GM12878 (cell line): ENCODE measurements at regions of chr2 and their contacts with region 1.

Region 1: DNA sequence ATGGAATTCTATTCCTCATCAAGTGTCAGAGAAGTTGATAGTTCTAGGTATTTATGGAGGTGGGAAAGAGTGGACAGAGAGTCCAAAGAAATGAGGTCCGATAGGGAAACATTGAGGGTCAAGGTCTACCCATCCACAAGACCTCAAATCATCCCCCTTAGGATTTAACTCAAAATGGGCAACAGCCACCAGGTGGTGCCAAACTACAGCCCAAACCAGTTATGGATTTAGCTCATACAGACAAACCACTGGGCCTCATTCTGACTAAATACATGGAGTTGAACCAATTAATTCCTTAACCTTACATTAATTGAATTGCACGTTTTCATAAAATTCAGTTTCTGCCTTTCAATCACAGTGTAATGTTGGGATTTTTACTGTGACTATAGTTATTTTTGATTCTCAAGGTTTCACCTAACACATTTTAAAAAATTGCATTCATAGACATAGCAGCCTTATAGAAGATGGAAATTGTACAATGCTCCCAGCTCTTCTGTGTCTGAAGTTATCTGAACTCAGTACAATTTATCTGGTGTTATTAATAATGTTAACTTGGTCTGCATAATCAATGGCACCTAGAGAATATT is 98.2 kb upstream of the HNMT start:
- DNase-seq: no peak
- ATAC-seq: peak; percentile 89
- H3K4me3 ChIP-seq: no peak overlapping the region
- H3K27ac ChIP-seq: no peak overlapping the region
- H3K4me1 ChIP-seq: no peaks in the 10 kb centered on the region
- H3K27me3 ChIP-seq: no peaks in the 10 kb centered on the region
- CTCF ChIP-seq: peak; percentile 66 to 79 (median 67); a peak in 5 of 6 replicates
- EP300 ChIP-seq: no peak
- POLR2A ChIP-seq: no peak
- RAD21 ChIP-seq: peak; percentile 81

Region 2: DNA sequence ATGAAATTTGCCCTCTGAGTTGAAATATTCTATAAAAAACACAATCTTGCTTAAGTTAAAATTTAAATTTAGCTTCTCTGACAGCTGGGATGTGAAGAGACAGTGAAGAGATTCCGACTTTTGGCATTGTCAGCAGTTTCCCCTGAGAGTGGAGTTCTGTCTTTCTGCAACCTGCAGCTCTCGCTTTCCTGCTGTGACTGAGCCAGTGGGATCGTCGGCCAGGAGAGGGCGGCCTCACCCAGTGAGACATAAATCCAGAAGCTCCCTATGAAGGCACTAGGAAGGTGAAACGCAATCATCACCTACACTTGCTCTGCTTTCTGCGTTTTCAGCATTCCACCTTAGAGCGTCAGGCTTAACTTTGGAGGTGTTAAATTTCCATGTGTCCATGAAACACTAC is 22.8 kb after region 1 on chr2:
- CTCF ChIA-PET with region 1: interaction called, 7 read pairs
- POLR2A ChIA-PET with region 1: no interaction called
- RAD21 ChIA-PET with region 1: interaction called, 3 read pairs
- SMC1A ChIA-PET with region 1: interaction called, 3 read pairs
- in situ Hi-C with region 1: no loop called
- intact Hi-C with region 1: loop called (anchors 2 kb)
- DNase-seq: no peak
- ATAC-seq: no peak
- H3K4me3 ChIP-seq: no peak overlapping the region
- H3K27ac ChIP-seq: no peak overlapping the region
- H3K4me1 ChIP-seq: no peaks in the 10 kb centered on the region
- H3K27me3 ChIP-seq: no peaks in the 10 kb centered on the region; a peak in 2 of 4 replicates
- CTCF ChIP-seq: peak; percentile 10 to 28 (median 22); a peak in 3 of 6 replicates
- EP300 ChIP-seq: no peak
- POLR2A ChIP-seq: no peak
- RAD21 ChIP-seq: 0 out of 2 replicates have a peak, but pooled peaks have one; percentile 8

Region 3: GRCh38 chr2:138090330-138090729 is 224.3 kb after region 1 on chr2:
- CTCF ChIA-PET with region 1: interaction called, 5 read pairs
- POLR2A ChIA-PET with region 1: no interaction called
- RAD21 ChIA-PET with region 1: no interaction called
- SMC1A ChIA-PET with region 1: interaction called, 3 read pairs
- in situ Hi-C with region 1: no loop called
- intact Hi-C with region 1: loop called (anchors 5 kb)
- DNase-seq: no peak
- ATAC-seq: peak; percentile 98
- H3K4me3 ChIP-seq: no peak overlapping the region
- H3K27ac ChIP-seq: no peak overlapping the region
- H3K4me1 ChIP-seq: no peaks in the 10 kb centered on the region
- H3K27me3 ChIP-seq: no peaks in the 10 kb centered on the region
- CTCF ChIP-seq: peak; percentile 56 to 73 (median 58); a peak in 5 of 6 replicates
- EP300 ChIP-seq: no peak
- POLR2A ChIP-seq: no peak
- RAD21 ChIP-seq: peak; percentile 75

Region 4: DNA sequence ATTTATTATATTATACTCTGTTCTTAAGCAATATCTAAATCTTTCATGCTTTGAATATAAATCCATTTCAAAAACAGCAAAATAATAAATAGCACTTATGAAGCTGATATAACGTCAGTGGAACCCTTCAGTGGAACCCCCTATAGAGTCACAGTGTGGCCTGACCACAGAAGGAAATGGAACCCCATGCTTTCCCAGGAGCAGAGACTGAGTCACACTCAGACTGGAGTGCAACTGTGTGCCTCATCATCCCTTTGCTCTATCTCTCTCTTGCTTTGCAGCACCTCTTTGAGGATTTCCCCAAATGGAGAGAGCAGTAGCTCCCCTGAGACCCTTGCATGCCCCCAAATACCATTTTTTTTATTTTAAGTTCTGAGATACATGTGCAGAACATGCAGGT is 901.1 kb after region 1 on chr2:
- CTCF ChIA-PET with region 1: no interaction called
- POLR2A ChIA-PET with region 1: no interaction called
- RAD21 ChIA-PET with region 1: no interaction called
- SMC1A ChIA-PET with region 1: no interaction called
- in situ Hi-C with region 1: no loop called
- intact Hi-C with region 1: no loop called
- DNase-seq: no peak
- ATAC-seq: no peak
- H3K4me3 ChIP-seq: no peak overlapping the region
- H3K27ac ChIP-seq: no peak overlapping the region
- H3K4me1 ChIP-seq: no peaks in the 10 kb centered on the region
- H3K27me3 ChIP-seq: no peaks in the 10 kb centered on the region
- CTCF ChIP-seq: no peak
- EP300 ChIP-seq: no peak
- POLR2A ChIP-seq: no peak
- RAD21 ChIP-seq: no peak